Right ventricle myocardium inferior (tissue), 1 donor: ENCODE measurements at regions of chr16 and their contacts with region 1.

Region 1: DNA sequence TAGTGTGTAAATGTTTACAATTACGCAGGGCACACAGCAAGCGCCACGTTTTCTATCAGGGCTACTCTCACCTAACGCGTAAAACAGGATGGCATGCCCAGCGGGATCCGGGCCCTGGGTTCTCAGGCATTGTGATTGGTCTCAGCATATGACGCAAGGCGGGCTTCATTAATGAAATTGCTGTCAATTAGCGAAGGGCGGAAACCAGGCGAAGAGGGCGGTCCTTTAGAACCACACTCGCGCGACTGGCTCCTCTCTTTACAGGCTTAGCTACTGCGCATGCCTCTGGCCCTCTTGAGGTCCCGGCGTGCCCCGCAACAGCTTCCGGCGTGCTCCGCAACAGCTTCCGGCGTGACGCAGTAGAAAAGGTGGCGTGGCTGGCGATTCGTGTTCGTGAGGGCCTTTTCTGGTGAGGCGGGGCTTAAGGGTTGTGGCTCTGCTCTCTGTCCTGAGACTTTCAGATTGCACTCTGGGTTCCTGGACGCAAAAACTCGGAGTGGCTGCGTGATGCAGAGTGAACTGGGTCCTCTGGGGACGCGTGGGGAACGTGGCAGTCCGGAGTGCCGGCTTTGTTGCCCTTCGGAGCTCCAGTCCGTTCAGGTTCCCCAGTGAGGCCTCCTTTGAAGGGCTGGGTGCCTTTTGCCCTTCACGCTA is 9.2 kb downstream of the OR2C1 start:
- DNase-seq: peak; percentile 89
- ATAC-seq: peak; percentile 99

Region 2: GRCh38 chr16:3182608-3183444 is 182.1 kb before region 1 on chr16:
- intact Hi-C with region 1: no loop called
- DNase-seq: peak; percentile 84
- ATAC-seq: no peak

Region 3: DNA sequence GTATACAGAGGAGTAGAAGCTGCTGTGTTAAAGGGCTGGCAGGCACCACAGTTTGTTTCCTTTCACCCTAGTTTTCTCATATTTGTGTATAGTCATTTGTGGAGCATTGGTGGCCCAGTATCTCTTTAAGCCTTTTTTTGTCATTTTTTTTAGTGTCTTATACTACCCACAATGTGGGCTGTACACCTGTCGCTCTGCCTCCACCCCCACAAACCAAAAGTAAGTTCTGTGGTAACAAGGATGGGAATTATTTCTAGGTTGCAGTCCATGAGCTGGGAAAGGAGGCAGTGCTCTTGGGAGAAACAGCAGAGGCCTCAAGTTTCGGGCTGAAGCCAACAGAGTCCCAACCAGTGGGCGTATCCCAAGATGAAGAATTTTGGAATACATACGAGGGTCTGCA is 53.4 kb before region 1 on chr16:
- intact Hi-C with region 1: loop called (anchors 5 kb)
- DNase-seq: no peak
- ATAC-seq: no peak